HepG2 (cell line): ENCODE measurements at regions of chr13 and their contacts with region 1.

Region 1: GRCh38 chr13:30617315-30618185 is at the start of gene USPL1:
- DNase-seq: peak; percentile 94
- ATAC-seq: peak; percentile 93
- H3K4me3 ChIP-seq: peak within 1 kb of the TSS; percentile 72 to 89 (median 81)
- H3K27ac ChIP-seq: peak within 1 kb of the TSS; percentile 99
- H3K4me1 ChIP-seq: peaks cover 34% of the 10 kb centered on the region
- H3K27me3 ChIP-seq: no peaks in the 10 kb centered on the region; a peak in 1 of 5 replicates
- CTCF ChIP-seq: peak; percentile 58
- EP300 ChIP-seq: peak; percentile 22 to 91; a peak in 3 of 4 replicates
- POLR2A ChIP-seq: peak in 1 of 2 experiments; percentile 90
- RAD21 ChIP-seq: peak; percentile 61
- total RNA-seq, gene USPL1: 13.7 and 18.3 TPM in 2 replicates

Region 2: DNA sequence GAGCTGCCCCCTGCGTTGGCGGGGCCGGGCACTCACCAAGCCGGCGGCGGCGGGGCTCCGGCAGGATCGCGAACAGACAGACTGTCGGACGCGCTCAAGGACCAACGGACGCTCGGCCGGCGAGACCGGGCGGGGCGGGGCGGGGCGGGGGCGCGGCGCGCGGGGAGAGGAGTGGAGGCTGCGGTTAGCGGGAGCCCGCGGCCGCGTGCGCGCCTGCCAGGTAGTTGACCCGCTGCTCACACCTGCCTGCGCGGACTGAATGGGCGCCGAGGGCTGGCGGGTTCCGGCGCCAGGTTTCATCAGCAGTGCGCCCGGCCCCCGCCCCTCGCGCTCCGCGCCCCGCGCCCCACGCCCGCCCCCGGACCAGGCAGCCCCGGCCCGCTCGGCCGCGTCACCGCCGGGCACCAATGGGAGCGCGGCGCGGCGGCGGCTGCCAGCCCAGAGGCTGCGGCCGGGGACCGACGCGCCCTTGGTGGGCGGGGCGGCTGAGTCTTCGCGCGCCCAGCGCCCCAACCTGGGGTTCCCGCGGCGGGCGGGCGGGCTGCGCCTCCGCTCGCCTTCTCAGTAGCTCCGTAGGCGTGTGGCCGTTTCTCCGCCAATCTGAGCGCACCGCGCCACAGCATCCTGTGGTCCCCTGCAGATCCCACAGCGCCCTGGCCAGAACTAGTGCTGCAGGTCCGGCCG is 1022.0 kb before region 1 on chr13 and contains the start of gene SLC7A1:
- CTCF ChIA-PET with region 1: no interaction called
- POLR2A ChIA-PET with region 1: no interaction called
- in situ Hi-C with region 1: no loop called
- intact Hi-C with region 1: loop called (anchors 5 kb)
- DNase-seq: peak; percentile 70
- ATAC-seq: peak; percentile 91
- H3K4me3 ChIP-seq: peak within 1 kb of the TSS; percentile 78 to 81 (median 80)
- H3K27ac ChIP-seq: peak within 1 kb of the TSS; percentile 77
- H3K4me1 ChIP-seq: peaks cover 44% of the 10 kb centered on the region
- H3K27me3 ChIP-seq: peaks cover 0 to 4% of the 10 kb centered on the region in 2 experiments; a peak in 2 of 5 replicates
- CTCF ChIP-seq: no peak
- EP300 ChIP-seq: no peak
- POLR2A ChIP-seq: peak; percentile 66 to 70
- RAD21 ChIP-seq: 0 out of 2 replicates have a peak, but pooled peaks have one; percentile 12
- total RNA-seq, gene SLC7A1: 13.6 and 14.5 TPM in 2 replicates

Region 3: DNA sequence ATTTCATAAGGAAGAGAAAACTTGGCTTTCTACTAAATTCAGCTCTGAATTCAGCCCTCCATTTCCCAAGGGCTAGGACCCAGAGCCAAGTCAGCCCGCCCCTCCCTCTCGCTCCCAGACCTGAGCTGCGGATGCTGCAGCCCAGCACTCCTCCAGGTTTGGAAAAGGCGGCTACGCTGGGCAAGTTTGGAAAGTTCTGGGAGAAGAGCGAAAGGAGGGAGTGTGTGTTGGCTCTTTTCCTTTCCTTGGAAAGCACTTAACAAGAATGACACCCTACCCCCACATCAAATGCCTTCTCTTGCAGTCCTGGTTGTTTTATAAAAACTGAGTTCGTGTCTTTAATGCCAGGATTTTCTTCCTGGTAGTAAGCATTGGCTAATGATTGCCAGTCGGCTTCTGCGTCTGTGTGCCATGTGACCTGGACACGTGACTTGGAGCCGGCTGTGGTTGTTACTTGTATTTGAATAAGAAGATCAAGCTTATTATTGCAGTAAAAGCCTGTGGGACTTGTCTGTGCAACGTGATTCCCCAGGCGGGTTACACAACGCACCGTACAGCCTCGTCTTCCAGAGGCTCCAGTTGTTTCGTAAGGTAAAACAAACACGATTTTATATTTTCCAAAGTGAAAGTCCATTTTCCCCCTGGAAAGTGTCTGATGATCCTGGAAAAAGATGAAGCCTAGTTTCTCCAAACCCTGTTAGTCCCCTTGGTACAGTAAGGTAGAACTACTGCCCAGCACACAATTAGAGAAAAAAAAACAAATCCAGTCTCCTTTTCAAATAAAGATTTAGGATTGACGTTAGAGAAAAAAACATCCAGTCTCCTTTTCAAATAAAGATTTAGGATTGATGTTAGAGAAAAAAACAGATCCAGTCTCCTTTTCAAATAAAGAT is 222.1 kb before region 1 on chr13:
- CTCF ChIA-PET with region 1: no interaction called
- POLR2A ChIA-PET with region 1: interaction called, 6 read pairs
- in situ Hi-C with region 1: no loop called
- intact Hi-C with region 1: loop called (anchors 5 kb)
- DNase-seq: peak; percentile 97
- ATAC-seq: peak; percentile 83
- H3K4me3 ChIP-seq: peak overlapping the region; percentile 56 to 72 (median 59)
- H3K27ac ChIP-seq: peak overlapping the region; percentile 95
- H3K4me1 ChIP-seq: peaks cover 78% of the 10 kb centered on the region
- H3K27me3 ChIP-seq: no peaks in the 10 kb centered on the region
- CTCF ChIP-seq: no peak
- EP300 ChIP-seq: peak; percentile 77 to 82
- POLR2A ChIP-seq: peak; percentile 27 to 51; a peak in 3 of 4 replicates
- RAD21 ChIP-seq: no peak

Region 4: GRCh38 chr13:30673669-30674521 is 56.3 kb after region 1 on chr13:
- CTCF ChIA-PET with region 1: no interaction called
- POLR2A ChIA-PET with region 1: interaction called, 10 read pairs
- in situ Hi-C with region 1: no loop called
- intact Hi-C with region 1: loop called (anchors 1 kb)
- DNase-seq: peak; percentile 76
- ATAC-seq: peak; percentile 95
- H3K4me3 ChIP-seq: peak overlapping the region; percentile 58 to 73 (median 68)
- H3K27ac ChIP-seq: peak overlapping the region; percentile 65
- H3K4me1 ChIP-seq: peaks cover 27% of the 10 kb centered on the region
- H3K27me3 ChIP-seq: no peaks in the 10 kb centered on the region
- CTCF ChIP-seq: peak; percentile 79
- EP300 ChIP-seq: peak in 1 of 2 experiments; percentile 67; a peak in 2 of 4 replicates
- POLR2A ChIP-seq: peak; percentile 38 to 52; a peak in 2 of 4 replicates
- RAD21 ChIP-seq: peak; percentile 84

Region 5: DNA sequence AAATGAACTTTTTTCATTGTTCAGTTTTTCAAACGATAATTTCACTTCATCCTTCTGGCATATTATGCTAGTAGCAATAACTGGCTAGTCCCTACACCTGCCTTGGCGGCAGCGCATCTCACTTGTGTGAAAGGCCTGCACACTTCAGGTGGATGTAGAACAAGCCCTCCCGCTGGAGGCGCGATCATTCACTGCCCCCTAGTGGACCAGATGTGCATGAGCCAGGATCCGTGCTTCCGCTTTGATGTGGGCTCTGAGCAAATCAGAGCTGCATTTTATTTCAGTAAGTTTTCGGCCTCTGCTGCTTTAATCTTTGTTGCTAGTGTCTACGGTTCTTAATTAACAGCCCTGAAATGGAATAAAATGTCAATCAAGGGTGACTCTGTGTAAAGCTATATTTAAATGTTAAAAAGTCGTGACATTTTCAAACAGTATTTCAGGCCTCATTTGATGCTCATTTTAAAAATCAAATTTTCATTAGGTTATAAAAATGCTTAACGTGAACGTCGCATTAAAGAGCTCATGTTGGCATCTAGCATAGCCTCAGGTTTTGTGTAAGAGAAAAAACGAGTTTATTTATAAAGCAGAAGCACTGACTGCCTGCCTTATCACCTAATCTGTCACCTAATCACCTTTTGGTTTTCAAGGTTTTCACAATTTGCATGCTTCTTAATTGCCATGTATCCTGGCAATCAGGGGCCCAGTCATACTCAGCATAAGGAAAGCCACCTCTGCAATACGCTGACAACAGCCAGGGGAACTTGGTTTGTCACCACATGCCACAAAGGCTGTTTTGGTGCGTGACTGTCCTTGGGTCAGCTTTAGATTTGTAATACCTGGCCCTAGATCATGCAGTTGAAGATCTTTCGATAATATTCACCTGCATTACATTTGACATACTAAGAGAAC is 427.1 kb after region 1 on chr13:
- CTCF ChIA-PET with region 1: no interaction called
- POLR2A ChIA-PET with region 1: no interaction called
- in situ Hi-C with region 1: loop called (anchors 10 kb)
- intact Hi-C with region 1: no loop called
- DNase-seq: peak; percentile 57
- ATAC-seq: peak; percentile 95
- H3K4me3 ChIP-seq: no peak overlapping the region; a peak in 1 of 6 replicates
- H3K27ac ChIP-seq: no peak overlapping the region
- H3K4me1 ChIP-seq: peaks cover 33% of the 10 kb centered on the region
- H3K27me3 ChIP-seq: no peaks in the 10 kb centered on the region; a peak in 1 of 5 replicates
- CTCF ChIP-seq: peak; percentile 95
- EP300 ChIP-seq: no peak
- POLR2A ChIP-seq: no peak
- RAD21 ChIP-seq: peak; percentile 79

Region 6: DNA sequence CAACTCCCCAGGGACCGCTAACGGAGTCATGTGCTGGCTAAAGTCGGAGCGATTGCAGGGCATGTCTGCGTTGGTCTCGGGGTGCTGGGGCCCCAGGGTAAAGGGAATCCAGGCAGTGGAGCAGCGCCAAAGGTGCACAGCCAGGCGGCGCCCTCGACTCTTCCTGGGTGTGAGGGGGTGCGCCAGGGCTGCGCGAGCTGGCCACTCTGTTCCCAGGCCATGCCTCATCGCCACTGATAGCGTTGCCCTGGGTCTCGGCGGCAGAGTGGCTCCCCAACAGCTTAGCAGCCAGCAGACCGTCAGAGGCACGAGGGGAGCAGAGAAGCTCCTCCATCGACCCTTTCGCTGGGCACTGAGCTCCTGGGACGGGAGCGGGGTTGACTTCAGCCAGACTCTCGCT is 734.9 kb after region 1 on chr13:
- CTCF ChIA-PET with region 1: no interaction called
- POLR2A ChIA-PET with region 1: no interaction called
- in situ Hi-C with region 1: no loop called
- intact Hi-C with region 1: no loop called
- DNase-seq: no peak
- ATAC-seq: no peak
- H3K4me3 ChIP-seq: no peak overlapping the region
- H3K27ac ChIP-seq: no peak overlapping the region
- H3K4me1 ChIP-seq: no peaks in the 10 kb centered on the region
- H3K27me3 ChIP-seq: no peaks in the 10 kb centered on the region; a peak in 2 of 5 replicates
- CTCF ChIP-seq: no peak
- EP300 ChIP-seq: no peak
- POLR2A ChIP-seq: no peak
- RAD21 ChIP-seq: no peak